Breast epithelium (tissue), 4 donors: ENCODE measurements at regions of chr13 and their contacts with region 1.

Region 1: GRCh38 chr13:43905435-43906031 is 25.8 kb downstream of the LACC1 start:
- DNase-seq: no peak
- H3K4me3 ChIP-seq: no peak overlapping the region
- H3K27ac ChIP-seq: no peak overlapping the region
- H3K4me1 ChIP-seq: no peaks in the 10 kb centered on the region
- H3K27me3 ChIP-seq: no peaks in the 10 kb centered on the region
- CTCF ChIP-seq: peak; percentile 62 to 88 (median 83)
- POLR2A ChIP-seq: no peak

Region 2: DNA sequence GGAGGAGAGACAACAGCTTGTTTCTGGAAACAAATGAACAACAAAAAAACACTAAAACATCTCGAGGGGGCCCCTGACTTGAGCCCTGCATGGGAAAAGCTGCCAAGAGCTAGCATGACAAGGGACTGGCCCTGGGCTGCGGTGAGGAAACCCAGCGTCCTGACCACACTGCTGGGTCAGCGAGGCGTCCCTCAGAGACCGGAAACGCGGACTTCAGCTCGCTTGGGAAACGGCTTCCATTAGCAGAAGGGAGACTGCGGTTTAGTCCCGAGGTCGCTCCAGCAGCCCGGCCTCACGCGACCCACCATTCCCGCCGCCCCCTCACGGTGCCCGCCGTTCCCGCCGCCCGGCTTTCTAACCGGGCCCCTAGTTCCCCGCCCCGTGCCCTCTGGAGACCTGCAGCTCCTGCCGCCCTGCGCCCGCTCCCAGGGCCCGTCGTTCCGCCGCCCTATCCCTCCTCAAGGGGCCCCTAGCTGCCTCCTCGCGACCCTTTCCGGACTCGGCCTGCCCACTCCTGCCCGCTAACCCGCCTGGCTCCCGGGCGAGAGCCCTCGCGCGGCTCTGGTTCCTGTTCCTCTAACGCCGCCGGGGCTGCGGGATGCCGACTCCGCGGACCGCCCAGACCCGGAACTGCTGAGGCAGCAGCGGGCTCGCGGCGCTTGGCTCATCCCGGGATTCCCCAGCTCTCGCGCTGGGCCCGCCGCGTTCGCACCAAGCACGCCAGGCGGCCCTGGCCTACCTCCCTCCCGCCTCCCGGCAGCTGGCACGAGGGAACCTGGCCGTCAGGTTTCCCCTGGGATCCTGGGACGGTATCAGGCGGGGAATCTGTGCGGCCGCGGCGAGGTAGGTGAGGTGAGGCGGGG is 26.4 kb before region 1 on chr13 and contains the start of gene CCDC122:
- intact Hi-C with region 1: no loop called
- DNase-seq: peak; percentile 77 to 91
- H3K4me3 ChIP-seq: peak within 1 kb of the TSS; percentile 81 to 95 (median 83)
- H3K27ac ChIP-seq: peak within 1 kb of the TSS; percentile 96 to 99
- H3K4me1 ChIP-seq: no peaks in the 10 kb centered on the region
- H3K27me3 ChIP-seq: no peaks in the 10 kb centered on the region
- CTCF ChIP-seq: no peak
- POLR2A ChIP-seq: peak; percentile 60
- total RNA-seq, gene CCDC122: 5.9 to 50.9 (median 13.9) TPM

Region 3: GRCh38 chr13:44373601-44374348 is 468.2 kb after region 1 on chr13 and contains the start of gene SERP2:
- intact Hi-C with region 1: loop called (anchors 5 kb)
- DNase-seq: no peak
- H3K4me3 ChIP-seq: peak within 1 kb of the TSS; percentile 56 to 94 (median 74)
- H3K27ac ChIP-seq: peak within 1 kb of the TSS; percentile 58 to 83
- H3K4me1 ChIP-seq: peaks cover 0 to 5% of the 10 kb centered on the region in 2 donors
- H3K27me3 ChIP-seq: no peaks in the 10 kb centered on the region
- CTCF ChIP-seq: no peak
- POLR2A ChIP-seq: no peak
- total RNA-seq, gene SERP2: 2.6 to 6.9 (median 6.4) TPM

Region 4: GRCh38 chr13:44470638-44471562 is 565.4 kb after region 1 on chr13:
- intact Hi-C with region 1: loop called (anchors 10 kb)
- DNase-seq: no peak
- H3K4me3 ChIP-seq: no peak overlapping the region
- H3K27ac ChIP-seq: no peak overlapping the region
- H3K4me1 ChIP-seq: no peaks in the 10 kb centered on the region
- H3K27me3 ChIP-seq: no peaks in the 10 kb centered on the region
- CTCF ChIP-seq: peak; percentile 28 to 64 (median 56)
- POLR2A ChIP-seq: no peak